ENCODE measurements at regions of chr2 and their contacts with region 1.

Region 1: GRCh38 chr2:233251306-233252116 is at the start of gene ATG16L1:
- DNase-seq: peak; percentile 97
- H3K4me3 Mint-ChIP-seq: peak within 1 kb of the TSS; percentile 85
- H3K27ac Mint-ChIP-seq: peak within 1 kb of the TSS; percentile 97
- H3K4me1 Mint-ChIP-seq: peaks cover 70% of the 10 kb centered on the region
- H3K27me3 Mint-ChIP-seq: no peaks in the 10 kb centered on the region
- total RNA-seq, gene ATG16L1: 21.2 to 24.2 TPM

Region 2: DNA sequence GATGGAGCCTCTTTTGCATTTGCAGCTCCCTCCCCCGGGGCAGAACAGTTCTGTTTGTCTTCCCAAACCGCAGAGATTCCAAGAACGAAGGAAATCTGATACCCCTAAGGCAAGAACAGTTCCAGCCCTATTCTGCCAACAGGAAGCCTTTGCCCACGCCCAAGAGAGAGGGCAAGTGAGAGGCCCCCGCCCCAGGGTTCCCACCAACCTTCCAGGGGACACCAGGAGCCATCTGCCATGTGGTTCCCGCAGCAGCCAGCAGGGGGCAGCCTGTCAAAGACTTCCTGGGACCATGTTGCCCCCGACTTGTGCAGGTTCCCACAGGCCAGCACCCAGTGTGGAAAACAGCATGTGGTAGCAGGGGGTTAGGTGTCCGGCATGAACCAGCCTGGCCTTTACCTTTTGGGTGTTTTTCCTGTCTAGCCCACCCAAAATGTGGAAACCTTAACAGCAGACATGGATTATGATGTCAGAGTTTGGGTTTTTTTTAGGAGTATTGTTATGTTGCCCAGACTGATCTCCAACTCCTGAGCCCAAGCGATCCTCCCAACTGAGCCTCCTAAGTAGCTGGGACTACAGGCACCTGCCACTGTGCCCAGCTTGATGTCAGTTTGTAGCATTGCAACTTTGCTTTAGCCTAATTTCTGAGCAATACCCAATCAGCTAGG is 639.8 kb before region 1 on chr2:
- CTCF ChIA-PET with region 1: no interaction called
- intact Hi-C with region 1: loop called (anchors 1 kb)
- DNase-seq: peak; percentile 79
- H3K4me3 Mint-ChIP-seq: no peak overlapping the region
- H3K27ac Mint-ChIP-seq: no peak overlapping the region
- H3K4me1 Mint-ChIP-seq: no peaks in the 10 kb centered on the region
- H3K27me3 Mint-ChIP-seq: no peaks in the 10 kb centered on the region

Region 3: GRCh38 chr2:232809349-232810124 is 442.0 kb before region 1 on chr2:
- CTCF ChIA-PET with region 1: no interaction called
- intact Hi-C with region 1: loop called (anchors 1 kb)
- DNase-seq: no peak
- H3K4me3 Mint-ChIP-seq: no peak overlapping the region
- H3K27ac Mint-ChIP-seq: no peak overlapping the region
- H3K4me1 Mint-ChIP-seq: no peaks in the 10 kb centered on the region
- H3K27me3 Mint-ChIP-seq: no peaks in the 10 kb centered on the region

Region 4: GRCh38 chr2:233053928-233054784 is 197.4 kb before region 1 on chr2:
- CTCF ChIA-PET with region 1: interaction called, 13 read pairs
- intact Hi-C with region 1: no loop called
- DNase-seq: peak; percentile 82
- H3K4me3 Mint-ChIP-seq: no peak overlapping the region
- H3K27ac Mint-ChIP-seq: no peak overlapping the region
- H3K4me1 Mint-ChIP-seq: peaks cover 8% of the 10 kb centered on the region
- H3K27me3 Mint-ChIP-seq: no peaks in the 10 kb centered on the region

Region 5: DNA sequence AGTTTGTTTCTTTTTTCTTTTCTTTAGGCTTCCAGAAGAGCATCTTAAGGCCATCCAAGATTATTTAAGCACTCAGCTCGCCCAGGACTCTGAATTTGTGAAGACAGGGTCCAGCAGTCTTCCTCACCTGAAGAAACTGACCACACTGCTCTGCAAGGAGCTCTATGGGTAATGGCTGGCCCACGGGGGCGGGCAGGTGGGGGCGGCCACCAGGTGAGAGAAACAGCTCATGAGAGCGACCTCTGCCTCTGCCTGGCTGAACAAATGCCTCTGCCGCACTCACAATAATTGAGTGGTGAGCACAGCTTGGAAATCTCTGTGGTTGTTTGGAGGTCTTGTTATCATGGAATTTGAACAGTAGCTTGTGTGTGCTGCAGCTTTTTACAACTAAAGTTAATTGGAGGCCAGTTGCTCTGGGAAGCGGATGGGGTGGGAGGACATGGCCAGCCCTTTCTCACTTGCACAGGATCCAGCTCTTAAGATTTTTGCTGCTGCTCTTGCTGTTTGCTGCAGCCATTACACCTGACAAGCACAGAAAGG is 121.0 kb before region 1 on chr2:
- CTCF ChIA-PET with region 1: no interaction called
- intact Hi-C with region 1: no loop called
- DNase-seq: no peak
- H3K4me3 Mint-ChIP-seq: no peak overlapping the region
- H3K27ac Mint-ChIP-seq: no peak overlapping the region
- H3K4me1 Mint-ChIP-seq: peaks cover 15% of the 10 kb centered on the region
- H3K27me3 Mint-ChIP-seq: no peaks in the 10 kb centered on the region

Region 6: DNA sequence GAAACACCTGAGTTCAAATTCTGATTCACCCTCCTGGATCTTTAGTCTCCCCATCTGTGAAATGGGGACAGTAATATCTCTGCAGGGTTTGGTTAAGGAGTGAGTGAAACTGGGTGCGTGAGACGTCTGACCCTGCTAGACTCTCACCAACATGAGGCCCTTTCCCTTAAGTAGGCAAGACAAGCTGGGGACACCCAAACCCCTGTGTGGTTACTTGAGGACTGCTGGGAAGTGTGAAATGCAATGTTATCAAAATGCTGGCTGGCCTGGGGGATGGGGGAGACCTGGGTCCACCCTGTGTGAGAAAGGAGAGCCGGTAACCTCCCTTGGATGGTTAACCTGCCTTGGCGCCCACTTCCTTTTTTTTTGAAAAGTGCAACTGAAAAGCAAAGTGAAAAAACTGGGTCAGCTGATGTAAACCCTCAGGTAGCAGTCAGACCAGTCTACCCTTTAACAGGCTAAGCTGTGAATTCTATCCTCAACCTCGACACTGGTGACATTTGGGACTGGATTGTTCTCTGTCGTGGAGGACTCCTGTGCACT is 109.1 kb before region 1 on chr2:
- CTCF ChIA-PET with region 1: no interaction called
- intact Hi-C with region 1: loop called (anchors 5 kb)
- DNase-seq: peak; percentile 28
- H3K4me3 Mint-ChIP-seq: no peak overlapping the region
- H3K27ac Mint-ChIP-seq: peak overlapping the region; percentile 73
- H3K4me1 Mint-ChIP-seq: peaks cover 27% of the 10 kb centered on the region
- H3K27me3 Mint-ChIP-seq: no peaks in the 10 kb centered on the region

Region 7: DNA sequence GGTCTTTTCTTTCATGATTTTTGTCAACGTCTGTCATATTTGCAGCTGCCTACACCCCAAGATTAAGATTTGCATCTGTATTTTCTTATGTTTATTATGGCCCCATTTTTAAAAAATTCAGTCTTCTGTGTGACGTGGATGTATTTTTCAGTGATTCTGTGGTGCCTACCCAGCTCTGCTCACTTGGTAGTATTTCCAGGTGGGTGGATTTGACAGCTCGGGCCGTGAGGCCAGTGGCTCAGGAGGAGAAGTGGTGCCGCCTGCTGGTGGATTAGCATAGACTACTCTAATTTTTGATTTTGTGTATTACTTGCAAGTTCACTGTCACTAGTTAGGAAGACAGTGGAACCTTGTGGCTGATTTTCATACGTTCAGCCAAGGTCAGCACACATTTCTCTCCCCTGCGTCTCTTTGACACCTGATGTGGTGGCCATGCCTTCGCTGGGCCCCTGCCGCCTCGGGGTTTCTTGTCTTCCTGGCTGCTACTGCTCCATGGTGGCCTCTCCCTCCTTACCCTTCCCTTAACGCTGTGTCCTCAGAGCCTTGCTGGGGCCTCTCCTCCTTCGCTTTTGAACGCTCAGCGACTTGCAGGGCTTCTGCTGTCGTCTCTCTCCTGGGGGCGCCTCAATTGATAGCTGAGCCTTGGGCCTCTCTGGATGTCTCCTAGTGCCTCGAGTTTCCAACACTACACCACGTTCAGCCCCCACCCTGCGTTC is 192.1 kb after region 1 on chr2:
- CTCF ChIA-PET with region 1: no interaction called
- intact Hi-C with region 1: loop called (anchors 1 kb)
- DNase-seq: peak; percentile 91
- H3K4me3 Mint-ChIP-seq: no peak overlapping the region
- H3K27ac Mint-ChIP-seq: peak overlapping the region; percentile 30
- H3K4me1 Mint-ChIP-seq: peaks cover 16% of the 10 kb centered on the region
- H3K27me3 Mint-ChIP-seq: no peaks in the 10 kb centered on the region